Endothelial cell of umbilical vein (primary cell): ENCODE measurements at regions of chr16 and their contacts with region 1.

Region 1: DNA sequence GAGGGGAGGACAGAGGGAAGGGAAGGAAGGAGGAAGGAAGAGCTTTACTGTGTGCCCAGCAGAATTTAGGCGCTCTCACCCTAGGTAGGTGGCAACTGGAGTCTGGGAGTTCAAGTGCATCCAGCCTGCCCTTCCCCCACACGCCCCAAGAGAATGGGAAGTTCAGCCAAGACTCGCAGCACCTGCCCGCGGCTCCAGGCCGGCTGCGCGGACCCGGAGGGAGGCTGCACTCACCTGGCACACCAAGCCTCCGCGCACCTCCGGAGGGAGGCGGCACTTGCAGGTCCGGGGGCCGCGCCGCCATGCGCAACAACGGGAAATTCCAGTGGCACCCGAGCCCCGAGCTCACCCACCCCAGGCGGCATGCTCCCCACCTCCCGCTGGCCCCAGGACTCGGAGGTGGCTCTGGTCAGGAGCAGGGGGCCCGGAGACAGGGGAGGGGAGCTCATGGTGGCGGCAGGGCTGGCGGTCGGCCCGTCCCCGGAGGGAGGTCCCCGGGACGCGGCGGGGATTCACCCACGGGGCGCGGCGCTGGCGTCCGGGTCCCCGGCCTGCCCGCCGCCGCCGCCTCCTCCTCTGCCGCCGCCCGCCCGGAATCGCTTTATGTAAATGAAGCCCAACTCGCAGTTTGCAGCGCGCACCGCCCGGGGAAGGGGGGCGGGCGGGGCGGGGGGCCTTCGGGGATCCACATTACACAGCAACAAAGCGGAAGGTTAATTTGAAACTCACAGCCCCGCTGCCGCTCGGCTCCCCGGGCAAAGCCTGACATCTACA is at the start of gene ZFHX3:
- DNase-seq: peak; percentile 53
- H3K4me3 ChIP-seq: peak within 1 kb of the TSS; percentile 57 to 74 (median 70)
- H3K27ac ChIP-seq: peak within 1 kb of the TSS; percentile 54
- H3K4me1 ChIP-seq: peaks cover 25% of the 10 kb centered on the region
- H3K27me3 ChIP-seq: no peaks in the 10 kb centered on the region
- CTCF ChIP-seq: no peak
- POLR2A ChIP-seq: no peak
- total RNA-seq, gene ZFHX3: 17.7 and 18.8 TPM in 2 replicates

Region 2: DNA sequence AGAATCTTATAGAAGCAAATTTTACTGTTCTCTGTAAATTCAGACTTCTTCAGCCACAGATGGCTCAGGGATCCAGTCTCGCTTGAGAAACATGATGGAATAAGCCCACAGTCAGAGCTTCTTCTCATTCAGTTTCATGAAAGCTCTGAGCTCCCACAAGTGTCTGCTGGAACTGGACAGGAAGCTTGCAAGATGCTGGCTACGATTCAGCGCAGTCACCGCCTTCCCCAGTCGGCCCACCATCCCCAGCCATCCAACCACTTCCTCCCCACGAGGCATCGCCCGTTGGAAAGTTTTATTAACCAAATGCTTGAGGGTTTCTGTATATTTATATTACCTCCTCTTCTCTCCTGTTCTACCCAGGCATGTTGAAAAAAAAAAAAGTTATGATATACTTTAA is 171.5 kb before region 1 on chr16:
- CTCF ChIA-PET with region 1: no interaction called
- POLR2A ChIA-PET with region 1: no interaction called
- dilution Hi-C with region 1: no loop called
- intact Hi-C with region 1: no loop called
- DNase-seq: peak; percentile 67
- H3K4me3 ChIP-seq: no peak overlapping the region
- H3K27ac ChIP-seq: peak overlapping the region; percentile 92
- H3K4me1 ChIP-seq: peaks cover 31% of the 10 kb centered on the region
- H3K27me3 ChIP-seq: no peaks in the 10 kb centered on the region
- CTCF ChIP-seq: no peak
- POLR2A ChIP-seq: no peak

Region 3: DNA sequence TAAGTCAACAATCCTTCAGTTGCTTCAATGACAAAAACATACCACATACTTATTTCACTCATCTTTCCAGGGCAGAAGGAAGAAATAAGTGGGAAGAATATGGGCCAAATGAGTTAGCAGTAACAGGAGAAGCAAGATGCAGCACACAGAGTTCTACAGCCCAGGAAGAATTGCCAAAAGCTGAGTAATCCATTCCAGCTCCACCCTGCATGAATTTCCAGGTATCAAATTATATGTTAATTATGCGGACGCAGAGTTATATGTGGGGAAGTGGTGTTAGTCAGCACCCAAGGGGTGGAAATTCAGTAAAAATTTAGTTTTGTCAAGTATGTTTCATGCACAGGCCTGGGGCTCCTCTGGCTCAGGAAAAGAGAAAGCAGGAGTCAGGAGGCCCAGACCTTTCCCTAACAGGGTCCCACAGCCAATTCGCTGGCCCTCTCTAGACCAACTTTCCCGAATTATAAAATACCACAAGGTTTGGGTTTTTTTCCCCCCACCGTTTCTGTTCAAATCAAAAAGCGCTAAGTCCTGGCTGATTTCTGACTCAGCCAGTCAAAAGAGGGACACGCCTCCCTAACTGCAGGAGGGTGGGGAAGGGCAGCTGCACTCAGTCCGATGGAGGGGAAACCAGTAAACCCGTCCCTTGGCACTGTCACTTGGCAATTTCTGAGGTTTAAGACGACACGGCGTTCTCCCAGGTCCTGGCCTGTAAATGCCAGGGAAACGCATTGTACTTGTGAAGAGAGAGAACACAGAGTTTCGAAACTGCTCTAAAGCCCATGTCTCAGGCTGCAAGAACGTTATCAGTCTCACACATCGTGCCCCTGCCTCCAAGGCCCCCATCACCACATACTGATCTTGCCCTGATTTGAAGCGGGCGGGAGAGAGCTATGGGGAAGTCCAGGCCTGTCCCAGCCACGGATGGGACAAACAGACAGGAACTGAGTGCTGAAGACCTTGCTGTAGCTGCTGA is 57.8 kb before region 1 on chr16:
- CTCF ChIA-PET with region 1: no interaction called
- POLR2A ChIA-PET with region 1: no interaction called
- dilution Hi-C with region 1: no loop called
- intact Hi-C with region 1: no loop called
- DNase-seq: peak; percentile 45
- H3K4me3 ChIP-seq: no peak overlapping the region
- H3K27ac ChIP-seq: peak overlapping the region; percentile 26
- H3K4me1 ChIP-seq: peaks cover 12% of the 10 kb centered on the region
- H3K27me3 ChIP-seq: no peaks in the 10 kb centered on the region
- CTCF ChIP-seq: no peak
- POLR2A ChIP-seq: no peak

Region 4: GRCh38 chr16:73020362-73020884 is 27.3 kb before region 1 on chr16:
- CTCF ChIA-PET with region 1: no interaction called
- POLR2A ChIA-PET with region 1: no interaction called
- dilution Hi-C with region 1: no loop called
- intact Hi-C with region 1: loop called (anchors 1 kb)
- DNase-seq: peak; percentile 89
- H3K4me3 ChIP-seq: no peak overlapping the region
- H3K27ac ChIP-seq: peak overlapping the region; percentile 78
- H3K4me1 ChIP-seq: peaks cover 30% of the 10 kb centered on the region
- H3K27me3 ChIP-seq: no peaks in the 10 kb centered on the region
- CTCF ChIP-seq: no peak
- POLR2A ChIP-seq: peak; percentile 6